Motor neuron (in vitro differentiated cells): ENCODE measurements at regions of chr5 and their contacts with region 1.

Region 1: GRCh38 chr5:33936004-33936380 is 194 bp upstream of the RXFP3 start:
- ATAC-seq: peak; percentile 72 to 96 (median 92)
- H3K4me3 ChIP-seq: peak overlapping the region; percentile 31 to 44 (median 34)
- H3K27ac ChIP-seq: no peak overlapping the region
- H3K4me1 ChIP-seq: peaks cover 0 to 3% of the 10 kb centered on the region in 2 donors

Region 2: DNA sequence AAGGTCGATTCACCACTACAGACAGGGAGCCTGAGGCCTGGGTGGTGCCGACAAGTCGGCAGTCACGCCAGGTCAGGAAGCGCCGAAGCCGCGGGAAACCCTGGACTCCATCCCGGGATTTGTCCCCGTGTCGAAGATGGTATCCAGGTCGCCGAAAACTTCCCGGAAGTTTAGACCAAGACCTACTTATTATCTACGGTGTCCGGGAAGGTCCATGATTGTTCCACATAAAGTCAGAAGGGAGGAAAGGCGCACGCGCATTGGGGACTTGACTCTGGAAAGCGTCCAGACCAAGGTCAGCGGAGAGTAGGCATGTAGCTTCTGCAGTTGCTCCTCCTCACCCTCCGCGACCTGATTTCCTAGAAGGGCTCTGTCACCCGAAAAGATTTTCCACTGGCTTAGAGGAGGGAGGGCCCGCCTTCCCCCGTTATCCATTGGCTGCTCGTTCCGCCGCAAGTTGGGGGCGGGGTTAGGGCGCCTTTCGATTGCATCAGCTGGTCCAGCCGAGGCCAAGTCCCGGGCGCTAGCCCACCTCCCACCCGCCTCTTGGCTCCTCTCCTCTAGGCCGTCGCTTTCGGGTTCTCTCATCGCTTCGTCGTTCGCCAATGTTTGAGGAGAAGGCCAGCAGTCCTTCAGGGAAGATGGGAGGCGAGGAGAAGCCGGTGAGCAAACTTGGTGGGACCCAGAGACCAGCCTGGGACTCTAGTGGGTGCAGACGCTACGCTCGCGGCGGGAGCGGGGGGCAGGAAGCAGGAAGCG is 495.3 kb before region 1 on chr5 and contains the start of gene TARS1:
- in situ Hi-C with region 1: loop called in 2 of 9 experiments (anchors 25 kb)
- ATAC-seq: peak; percentile 89 to 98 (median 97)
- H3K4me3 ChIP-seq: peak within 1 kb of the TSS; percentile 62 to 80 (median 79)
- H3K27ac ChIP-seq: peak within 1 kb of the TSS; percentile 90 to 95
- H3K4me1 ChIP-seq: peaks cover 11 to 13% of the 10 kb centered on the region in 2 donors
- total RNA-seq, gene TARS1: 143 to 300 (median 179) TPM

Region 3: GRCh38 chr5:33470544-33470943 is 465.4 kb before region 1 on chr5:
- in situ Hi-C with region 1: loop called in 3 of 9 experiments (anchors 25 kb)
- ATAC-seq: peak in 6 of 8 experiments; percentile 15 to 86 (median 58)
- H3K4me3 ChIP-seq: no peak overlapping the region
- H3K27ac ChIP-seq: no peak overlapping the region
- H3K4me1 ChIP-seq: no peaks in the 10 kb centered on the region

Region 4: DNA sequence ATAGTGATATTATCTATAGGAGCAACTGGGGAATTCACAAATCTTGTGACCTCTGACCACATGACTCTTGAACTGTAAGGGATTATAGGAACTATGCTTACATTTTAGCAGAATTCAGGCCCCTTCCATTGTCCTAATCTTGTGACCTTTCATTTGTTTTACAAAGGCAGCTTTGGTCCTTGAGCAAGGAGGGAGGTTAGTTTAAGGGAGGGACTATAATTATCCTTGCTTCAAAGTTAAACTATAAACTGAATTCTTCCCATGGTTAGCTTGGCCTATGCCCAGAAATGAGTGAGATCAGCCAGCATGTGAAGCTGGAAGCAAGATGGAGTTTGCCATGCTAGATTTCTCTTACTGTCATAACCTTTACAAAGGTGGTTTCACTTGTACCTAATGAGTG is 444.1 kb before region 1 on chr5:
- in situ Hi-C with region 1: loop called in 1 of 9 experiments (anchors 25 kb)
- ATAC-seq: no peak
- H3K4me3 ChIP-seq: no peak overlapping the region
- H3K27ac ChIP-seq: no peak overlapping the region
- H3K4me1 ChIP-seq: no peaks in the 10 kb centered on the region

Region 5: DNA sequence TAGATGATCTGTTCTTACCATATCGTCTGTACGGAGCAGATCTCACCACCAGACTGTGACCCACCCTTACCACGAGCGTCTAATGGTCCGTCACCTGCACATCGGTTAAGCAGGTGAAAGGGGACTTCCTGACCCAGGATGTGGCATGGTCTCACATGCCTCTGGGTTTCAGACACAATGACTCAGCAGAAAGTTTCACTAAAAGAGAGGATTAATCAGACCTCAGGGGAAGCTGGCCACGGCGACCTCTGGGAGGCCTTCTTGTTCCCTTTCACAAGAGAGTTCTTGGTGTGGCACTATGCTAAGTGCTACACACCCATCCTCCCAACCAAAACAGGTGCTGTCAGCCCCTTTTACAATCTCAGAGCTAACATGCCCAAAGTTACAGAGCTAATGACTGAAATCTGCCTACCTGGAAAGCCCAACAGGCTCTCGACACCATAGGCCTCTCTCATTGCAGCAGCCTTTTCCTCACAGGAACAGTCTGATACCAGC is 85.8 kb before region 1 on chr5:
- in situ Hi-C with region 1: no loop called
- ATAC-seq: peak in 2 of 8 experiments; percentile 34 to 68
- H3K4me3 ChIP-seq: no peak overlapping the region
- H3K27ac ChIP-seq: no peak overlapping the region
- H3K4me1 ChIP-seq: peaks cover 0 to 2% of the 10 kb centered on the region in 2 donors